ENCODE measurements at regions of chr13 and their contacts with region 1.

Region 1: DNA sequence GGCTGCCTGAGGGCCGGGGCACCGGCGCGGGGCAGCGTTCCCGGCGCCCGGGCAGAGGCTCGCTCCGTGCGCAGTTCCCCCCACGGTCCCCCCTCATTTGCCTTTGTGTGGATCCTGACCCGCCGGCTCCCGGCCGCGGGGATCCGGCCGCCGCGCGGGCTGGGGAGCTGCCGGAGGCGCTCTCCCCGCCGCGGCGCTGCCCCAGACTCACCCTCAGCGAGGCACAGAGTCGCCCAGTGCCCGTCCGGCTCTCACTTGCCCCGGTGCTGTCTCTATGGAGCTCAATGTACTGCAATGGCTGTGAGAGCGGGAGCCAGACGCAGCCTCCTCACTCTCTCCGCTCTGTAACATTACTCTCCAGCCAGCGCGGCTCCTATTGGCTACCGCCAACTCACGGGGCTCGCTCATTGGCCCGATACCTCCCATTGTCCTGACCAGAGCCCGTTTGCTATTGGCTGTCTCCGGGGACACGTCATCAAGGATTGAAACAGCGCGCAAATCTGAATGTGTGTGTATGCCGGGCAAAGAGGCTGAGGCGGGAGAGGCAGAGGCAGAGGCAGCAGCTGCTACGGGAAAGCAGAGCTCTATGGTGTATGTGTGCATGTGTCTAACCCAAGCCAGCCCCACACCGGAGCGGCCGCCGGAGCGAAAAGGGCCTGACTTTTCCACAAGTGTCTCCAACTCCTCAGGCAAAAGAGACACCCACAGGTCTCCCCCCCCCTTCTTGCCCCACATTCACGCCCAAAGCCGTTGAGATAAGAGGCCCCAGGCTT is at the start of gene HMGB1:
- DNase-seq: peak; percentile 96 to 98 (median 96)
- H3K4me3 ChIP-seq: peak within 1 kb of the TSS; percentile 69 to 80
- H3K4me3 Mint-ChIP-seq: peak within 1 kb of the TSS; percentile 93 to 98 (median 95)
- H3K27ac ChIP-seq: peak within 1 kb of the TSS; percentile 90
- H3K27ac Mint-ChIP-seq: peak within 1 kb of the TSS; percentile 97 to 99 (median 99)
- H3K4me1 ChIP-seq: peaks cover 33% of the 10 kb centered on the region
- H3K4me1 Mint-ChIP-seq: peaks cover 15 to 52% (median 24%) of the 10 kb centered on the region in 4 donors
- H3K27me3 ChIP-seq: no peaks in the 10 kb centered on the region
- H3K27me3 Mint-ChIP-seq: peaks cover 2 to 3% of the 10 kb centered on the region in 2 donors
- total RNA-seq, gene HMGB1: 311 to 331 TPM

Region 2: GRCh38 chr13:29935309-29935981 is 530.3 kb before region 1 on chr13:
- CTCF ChIA-PET with region 1: no interaction called
- POLR2A ChIA-PET with region 1: interaction called, 5 read pairs
- intact Hi-C with region 1: loop called (anchors 5 kb)
- DNase-seq: peak; percentile 80 to 86 (median 84)
- H3K4me3 ChIP-seq: peak overlapping the region; percentile 72 to 82
- H3K4me3 Mint-ChIP-seq: peak overlapping the region; percentile 86 to 96 (median 94)
- H3K27ac ChIP-seq: peak overlapping the region; percentile 59
- H3K27ac Mint-ChIP-seq: peak overlapping the region; percentile 86 to 97 (median 92)
- H3K4me1 ChIP-seq: peaks cover 64% of the 10 kb centered on the region
- H3K4me1 Mint-ChIP-seq: peaks cover 46 to 77% (median 64%) of the 10 kb centered on the region in 4 donors
- H3K27me3 ChIP-seq: no peaks in the 10 kb centered on the region
- H3K27me3 Mint-ChIP-seq: peaks cover 0 to 2% of the 10 kb centered on the region in 2 donors

Region 3: GRCh38 chr13:30158774-30159445 is 306.9 kb before region 1 on chr13:
- CTCF ChIA-PET with region 1: interaction called, 6 read pairs
- POLR2A ChIA-PET with region 1: interaction called, 5 read pairs
- intact Hi-C with region 1: loop called (anchors 1 kb)
- DNase-seq: peak in 4 of 5 donors; percentile 58 to 61 (median 60)
- H3K4me3 ChIP-seq: no peak overlapping the region
- H3K4me3 Mint-ChIP-seq: peak overlapping the region in 7 of 8 donors; percentile 17 to 69 (median 59)
- H3K27ac ChIP-seq: no peak overlapping the region
- H3K27ac Mint-ChIP-seq: peak overlapping the region in 5 of 7 donors; percentile 7 to 89 (median 74)
- H3K4me1 ChIP-seq: peaks cover 39% of the 10 kb centered on the region
- H3K4me1 Mint-ChIP-seq: peaks cover 26 to 61% (median 41%) of the 10 kb centered on the region in 4 donors
- H3K27me3 ChIP-seq: no peaks in the 10 kb centered on the region
- H3K27me3 Mint-ChIP-seq: no peaks in the 10 kb centered on the region

Region 4: GRCh38 chr13:30355384-30355699 is 110.4 kb before region 1 on chr13:
- CTCF ChIA-PET with region 1: interaction called, 10 read pairs
- POLR2A ChIA-PET with region 1: interaction called, 8 read pairs
- intact Hi-C with region 1: no loop called
- DNase-seq: no peak
- H3K4me3 ChIP-seq: no peak overlapping the region
- H3K4me3 Mint-ChIP-seq: no peak overlapping the region
- H3K27ac ChIP-seq: no peak overlapping the region
- H3K27ac Mint-ChIP-seq: peak overlapping the region in 1 of 7 donors; percentile 52
- H3K4me1 ChIP-seq: peaks cover 5% of the 10 kb centered on the region
- H3K4me1 Mint-ChIP-seq: peaks cover 6 to 16% (median 10%) of the 10 kb centered on the region in 4 donors
- H3K27me3 ChIP-seq: no peaks in the 10 kb centered on the region
- H3K27me3 Mint-ChIP-seq: no peaks in the 10 kb centered on the region

Region 5: DNA sequence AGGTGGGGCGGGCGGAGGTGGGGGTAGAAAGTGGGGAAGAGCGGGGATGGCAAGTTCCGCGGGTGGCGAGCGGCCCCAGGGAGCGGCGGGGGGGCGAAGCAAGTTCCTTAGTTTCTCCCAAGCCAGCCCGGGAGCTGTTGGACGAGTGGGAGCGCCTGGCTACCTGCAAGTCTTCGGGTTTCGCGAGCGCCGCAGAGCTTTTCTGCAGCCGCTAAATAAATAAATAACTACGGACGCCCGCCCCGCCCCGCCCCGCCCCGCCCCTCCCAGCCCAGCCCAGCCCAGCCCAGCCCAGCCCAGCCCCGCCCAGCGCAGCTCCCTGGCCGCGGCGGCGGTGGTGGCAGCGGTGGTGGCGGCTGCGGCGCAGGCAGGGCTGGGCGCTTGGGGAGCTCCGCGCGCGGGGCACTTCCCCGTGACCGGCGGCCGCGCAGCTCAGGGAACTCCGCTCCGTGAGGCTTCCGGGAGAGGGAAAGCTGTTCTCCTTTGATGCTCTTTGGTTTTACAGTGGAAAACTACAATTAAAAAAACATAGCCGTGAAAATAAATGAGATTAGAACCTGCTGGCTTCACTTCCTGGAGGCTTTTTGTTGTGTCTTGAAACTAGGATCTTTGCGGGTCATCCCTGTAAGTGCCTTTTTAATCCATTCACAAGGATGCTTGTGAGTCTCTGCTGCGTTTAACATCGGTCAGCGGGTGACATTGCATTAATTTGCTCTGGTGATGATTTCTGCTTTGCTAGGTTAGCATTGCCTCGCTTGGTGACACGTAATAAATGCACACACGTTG is 43.5 kb before region 1 on chr13 and contains the start of gene UBE2L5:
- CTCF ChIA-PET with region 1: interaction called, 3 read pairs
- POLR2A ChIA-PET with region 1: interaction called, 19 read pairs
- intact Hi-C with region 1: loop called (anchors 5 kb)
- DNase-seq: peak; percentile 68 to 77 (median 71)
- H3K4me3 ChIP-seq: peak within 1 kb of the TSS; percentile 42 to 58
- H3K4me3 Mint-ChIP-seq: peak within 1 kb of the TSS; percentile 81 to 94 (median 88)
- H3K27ac ChIP-seq: peak within 1 kb of the TSS; percentile 1
- H3K27ac Mint-ChIP-seq: peak within 1 kb of the TSS; percentile 78 to 93 (median 87)
- H3K4me1 ChIP-seq: peaks cover 19% of the 10 kb centered on the region
- H3K4me1 Mint-ChIP-seq: peaks cover 13 to 27% (median 18%) of the 10 kb centered on the region in 4 donors
- H3K27me3 ChIP-seq: no peaks in the 10 kb centered on the region
- H3K27me3 Mint-ChIP-seq: no peaks in the 10 kb centered on the region
- total RNA-seq, gene UBE2L5: not detected

Region 6: GRCh38 chr13:30486230-30487074 is 20.7 kb after region 1 on chr13:
- CTCF ChIA-PET with region 1: no interaction called
- POLR2A ChIA-PET with region 1: no interaction called
- intact Hi-C with region 1: no loop called
- DNase-seq: no peak
- H3K4me3 ChIP-seq: no peak overlapping the region
- H3K4me3 Mint-ChIP-seq: no peak overlapping the region
- H3K27ac ChIP-seq: no peak overlapping the region
- H3K27ac Mint-ChIP-seq: no peak overlapping the region
- H3K4me1 ChIP-seq: no peaks in the 10 kb centered on the region
- H3K4me1 Mint-ChIP-seq: no peaks in the 10 kb centered on the region
- H3K27me3 ChIP-seq: no peaks in the 10 kb centered on the region
- H3K27me3 Mint-ChIP-seq: no peaks in the 10 kb centered on the region

Region 7: GRCh38 chr13:30520571-30520970 is 54.8 kb after region 1 on chr13:
- CTCF ChIA-PET with region 1: no interaction called
- POLR2A ChIA-PET with region 1: no interaction called
- intact Hi-C with region 1: no loop called
- DNase-seq: no peak
- H3K4me3 ChIP-seq: no peak overlapping the region
- H3K4me3 Mint-ChIP-seq: no peak overlapping the region
- H3K27ac ChIP-seq: no peak overlapping the region
- H3K27ac Mint-ChIP-seq: no peak overlapping the region
- H3K4me1 ChIP-seq: no peaks in the 10 kb centered on the region
- H3K4me1 Mint-ChIP-seq: peaks cover 4 to 7% (median 4%) of the 10 kb centered on the region in 4 donors
- H3K27me3 ChIP-seq: no peaks in the 10 kb centered on the region
- H3K27me3 Mint-ChIP-seq: no peaks in the 10 kb centered on the region

Region 8: DNA sequence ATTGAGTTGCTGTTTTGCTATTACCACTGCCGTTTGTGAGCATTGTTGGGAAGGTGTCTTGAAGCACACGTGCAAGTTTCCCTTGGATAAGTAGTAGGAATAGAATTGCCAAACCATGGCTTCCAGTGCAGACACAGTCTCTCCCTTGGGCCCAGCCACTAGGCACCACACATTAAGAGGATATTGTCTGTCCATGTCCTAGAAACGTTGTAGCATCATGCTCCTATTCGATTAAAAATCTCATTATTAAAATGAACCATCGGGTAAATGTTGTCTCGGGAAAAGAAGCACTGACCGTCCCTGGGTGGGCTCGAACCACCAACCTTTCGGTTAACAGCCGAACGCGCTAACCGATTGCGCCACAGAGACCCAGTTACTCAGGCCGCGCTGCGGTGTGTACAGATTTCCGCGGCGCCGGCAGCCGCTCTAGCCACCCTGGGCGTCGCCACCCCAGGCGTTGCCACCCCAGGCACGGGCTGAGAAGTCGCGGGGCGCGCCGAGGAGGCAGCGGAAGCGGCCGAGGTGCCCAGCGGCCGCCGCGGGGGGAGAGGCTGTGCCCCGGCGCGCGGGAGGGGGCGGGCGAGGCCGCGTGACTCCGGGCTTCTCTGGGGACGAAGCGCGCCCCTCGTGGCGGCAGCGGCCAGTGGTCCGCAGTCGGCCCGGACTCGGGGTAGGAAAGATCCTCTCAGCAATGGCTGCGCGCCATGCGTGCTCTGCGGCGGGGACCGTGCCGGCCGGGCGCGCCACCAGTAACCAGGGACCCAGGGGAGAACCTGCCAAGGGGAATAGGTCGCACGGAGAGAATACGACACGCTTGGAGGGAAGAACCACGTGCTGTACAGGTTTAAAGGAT is 208.1 kb after region 1 on chr13:
- CTCF ChIA-PET with region 1: no interaction called
- POLR2A ChIA-PET with region 1: no interaction called
- intact Hi-C with region 1: loop called (anchors 5 kb)
- DNase-seq: peak; percentile 87 to 91 (median 90)
- H3K4me3 ChIP-seq: peak overlapping the region; percentile 62 to 74
- H3K4me3 Mint-ChIP-seq: peak overlapping the region; percentile 85 to 94 (median 90)
- H3K27ac ChIP-seq: peak overlapping the region; percentile 20
- H3K27ac Mint-ChIP-seq: peak overlapping the region; percentile 83 to 100 (median 94)
- H3K4me1 ChIP-seq: peaks cover 7% of the 10 kb centered on the region
- H3K4me1 Mint-ChIP-seq: peaks cover 14 to 36% (median 20%) of the 10 kb centered on the region in 4 donors
- H3K27me3 ChIP-seq: no peaks in the 10 kb centered on the region
- H3K27me3 Mint-ChIP-seq: peaks cover 0 to 4% of the 10 kb centered on the region in 2 donors

Region 9: DNA sequence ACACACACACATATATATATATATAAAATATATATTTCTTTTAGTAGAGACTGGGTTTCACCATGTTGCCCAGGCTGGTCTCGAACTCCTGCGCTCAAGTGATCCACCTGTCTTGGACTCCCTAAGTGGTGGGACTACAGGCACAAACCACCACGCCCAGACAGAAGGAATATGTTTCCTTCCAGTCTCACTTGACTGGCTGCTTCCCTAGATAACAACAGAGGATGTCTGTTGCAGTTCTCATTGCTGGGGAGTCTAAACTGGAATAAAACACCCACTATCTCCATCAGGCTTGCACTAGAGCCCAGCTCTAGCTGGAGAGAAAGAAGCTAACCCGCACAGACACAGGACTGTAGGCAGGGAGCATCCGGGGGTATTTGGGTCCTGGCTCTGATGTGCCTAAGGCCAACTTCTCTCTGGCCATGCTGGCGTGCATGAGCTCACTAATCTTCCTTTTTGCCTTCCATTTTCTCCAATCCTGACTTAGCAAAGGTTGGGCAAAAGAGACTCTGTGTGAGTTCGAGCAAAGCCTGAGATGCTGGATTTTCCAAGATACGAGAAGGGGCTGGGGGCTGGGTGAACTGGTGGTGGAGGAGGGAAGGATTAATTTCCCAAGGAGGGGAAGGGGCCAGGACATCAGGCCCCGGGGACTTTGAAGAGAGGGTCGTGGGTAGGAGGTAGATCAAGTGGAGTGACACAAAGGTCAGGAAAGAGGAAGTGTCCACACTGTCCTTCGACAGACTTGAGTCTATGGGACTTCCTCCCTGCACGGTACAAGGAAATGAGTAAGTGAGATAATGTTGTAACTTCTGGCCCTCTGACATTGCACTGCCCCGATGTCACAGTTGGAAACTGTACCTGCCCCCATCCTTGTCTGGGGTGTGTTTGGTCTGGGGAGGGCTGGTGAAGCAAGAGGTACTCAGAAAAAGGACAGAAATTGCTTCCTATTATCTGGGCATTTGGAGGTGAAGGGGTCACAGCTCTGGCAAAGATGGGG is 247.1 kb after region 1 on chr13:
- CTCF ChIA-PET with region 1: no interaction called
- POLR2A ChIA-PET with region 1: no interaction called
- intact Hi-C with region 1: no loop called
- DNase-seq: no peak
- H3K4me3 ChIP-seq: no peak overlapping the region
- H3K4me3 Mint-ChIP-seq: no peak overlapping the region
- H3K27ac ChIP-seq: no peak overlapping the region
- H3K27ac Mint-ChIP-seq: no peak overlapping the region
- H3K4me1 ChIP-seq: no peaks in the 10 kb centered on the region
- H3K4me1 Mint-ChIP-seq: peaks cover 0 to 2% (median 0%) of the 10 kb centered on the region in 4 donors
- H3K27me3 ChIP-seq: no peaks in the 10 kb centered on the region
- H3K27me3 Mint-ChIP-seq: peaks cover 0 to 3% of the 10 kb centered on the region in 2 donors